Gastrocnemius medialis (tissue), 4 donors: ENCODE measurements at regions of chr14 and their contacts with region 1.

Region 1: DNA sequence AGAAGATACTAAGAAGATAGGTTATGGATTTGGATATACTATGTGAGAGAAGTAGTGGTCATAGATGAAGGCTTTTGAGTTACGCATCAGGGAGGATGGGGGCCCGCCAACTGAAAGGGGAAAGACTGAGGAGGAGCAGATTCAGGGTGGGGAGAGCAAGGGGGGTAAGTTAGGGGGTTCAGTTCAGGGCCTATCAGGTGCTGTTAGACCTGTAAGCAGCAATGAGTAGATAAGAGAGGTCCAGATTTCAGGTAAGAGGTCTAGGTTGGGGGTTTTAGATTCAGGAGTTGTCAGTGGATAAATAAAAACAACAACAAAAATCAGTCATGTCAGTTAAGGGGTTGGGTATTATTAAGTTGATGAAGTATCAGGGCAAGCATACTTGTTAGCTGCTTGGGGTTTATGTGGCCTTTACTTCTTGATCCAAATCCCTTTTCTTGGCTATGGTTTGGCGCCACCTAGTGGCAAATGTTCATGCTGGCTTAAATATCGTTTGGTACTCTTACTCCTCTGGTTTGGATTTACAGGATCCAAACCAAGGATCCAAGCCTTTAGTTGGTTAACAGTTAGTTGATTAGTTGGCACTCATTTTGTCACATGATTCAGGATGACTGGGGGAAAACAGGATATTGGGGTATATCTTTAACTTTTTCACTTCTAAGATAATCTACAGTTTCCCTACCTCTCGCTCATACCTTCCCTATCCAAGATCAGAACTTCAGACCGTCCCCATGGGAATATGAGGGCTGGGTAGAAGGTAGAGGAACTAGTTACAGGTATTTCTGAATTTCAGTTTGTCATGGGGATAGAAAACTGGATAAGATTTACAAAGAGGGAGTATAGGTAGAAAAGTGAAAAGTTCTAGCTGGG is 65.1 kb downstream of the PCNX1 start:
- DNase-seq: peak; percentile 55 to 79
- ATAC-seq: peak; percentile 94 to 97
- H3K4me3 ChIP-seq: no peak overlapping the region
- H3K27ac ChIP-seq: peak overlapping the region in 1 of 4 donors; percentile 0
- H3K4me1 ChIP-seq: peaks cover 0 to 4% of the 10 kb centered on the region in 2 donors
- H3K27me3 ChIP-seq: no peaks in the 10 kb centered on the region
- CTCF ChIP-seq: peak; percentile 76 to 96 (median 82)
- POLR2A ChIP-seq: no peak

Region 2: DNA sequence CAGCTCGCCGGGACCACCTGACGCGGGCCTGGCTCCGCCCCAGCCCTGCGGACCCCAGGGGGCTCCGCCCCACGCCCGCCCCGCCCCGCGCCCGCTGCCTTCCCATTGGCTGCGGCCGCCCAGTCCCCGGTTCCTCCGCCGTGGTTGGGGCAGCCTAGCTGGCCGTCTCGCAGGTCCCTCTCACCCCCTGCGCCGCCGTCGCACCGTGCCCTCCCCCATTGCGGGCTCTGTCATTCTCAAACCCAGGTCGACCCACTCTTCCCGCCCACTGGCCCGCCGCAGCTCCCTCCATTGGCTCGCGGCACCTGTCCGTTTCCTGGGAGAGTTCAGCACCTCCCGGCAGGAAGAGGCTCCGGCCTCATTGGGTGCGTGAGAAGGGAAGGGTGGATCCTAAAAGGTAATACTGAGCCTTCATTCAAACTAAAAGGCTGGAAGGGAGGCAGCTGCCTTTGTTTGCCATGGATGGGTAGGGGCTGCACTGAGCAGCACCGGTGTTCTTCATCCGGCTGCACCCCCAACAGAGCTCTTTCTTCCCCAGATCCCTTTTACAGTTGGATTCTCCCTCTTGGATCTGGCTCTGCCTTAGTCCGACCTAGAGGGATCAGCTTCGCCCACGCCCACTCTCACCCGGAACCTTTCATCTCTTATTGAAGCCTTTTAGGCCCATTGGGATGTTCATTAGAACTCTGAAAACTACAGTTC is 162.6 kb before region 1 on chr14:
- in situ Hi-C with region 1: loop called in 2 of 4 experiments (anchors 10 to 25 kb)
- intact Hi-C with region 1: no loop called
- DNase-seq: peak; percentile 77 to 95
- ATAC-seq: peak; percentile 90 to 92
- H3K4me3 ChIP-seq: peak overlapping the region; percentile 62 to 85 (median 76)
- H3K27ac ChIP-seq: peak overlapping the region; percentile 49 to 84 (median 80)
- H3K4me1 ChIP-seq: peaks cover 6 to 10% of the 10 kb centered on the region in 2 donors
- H3K27me3 ChIP-seq: peaks cover 0 to 6% (median 0%) of the 10 kb centered on the region in 3 donors
- CTCF ChIP-seq: no peak
- POLR2A ChIP-seq: no peak

Region 3: DNA sequence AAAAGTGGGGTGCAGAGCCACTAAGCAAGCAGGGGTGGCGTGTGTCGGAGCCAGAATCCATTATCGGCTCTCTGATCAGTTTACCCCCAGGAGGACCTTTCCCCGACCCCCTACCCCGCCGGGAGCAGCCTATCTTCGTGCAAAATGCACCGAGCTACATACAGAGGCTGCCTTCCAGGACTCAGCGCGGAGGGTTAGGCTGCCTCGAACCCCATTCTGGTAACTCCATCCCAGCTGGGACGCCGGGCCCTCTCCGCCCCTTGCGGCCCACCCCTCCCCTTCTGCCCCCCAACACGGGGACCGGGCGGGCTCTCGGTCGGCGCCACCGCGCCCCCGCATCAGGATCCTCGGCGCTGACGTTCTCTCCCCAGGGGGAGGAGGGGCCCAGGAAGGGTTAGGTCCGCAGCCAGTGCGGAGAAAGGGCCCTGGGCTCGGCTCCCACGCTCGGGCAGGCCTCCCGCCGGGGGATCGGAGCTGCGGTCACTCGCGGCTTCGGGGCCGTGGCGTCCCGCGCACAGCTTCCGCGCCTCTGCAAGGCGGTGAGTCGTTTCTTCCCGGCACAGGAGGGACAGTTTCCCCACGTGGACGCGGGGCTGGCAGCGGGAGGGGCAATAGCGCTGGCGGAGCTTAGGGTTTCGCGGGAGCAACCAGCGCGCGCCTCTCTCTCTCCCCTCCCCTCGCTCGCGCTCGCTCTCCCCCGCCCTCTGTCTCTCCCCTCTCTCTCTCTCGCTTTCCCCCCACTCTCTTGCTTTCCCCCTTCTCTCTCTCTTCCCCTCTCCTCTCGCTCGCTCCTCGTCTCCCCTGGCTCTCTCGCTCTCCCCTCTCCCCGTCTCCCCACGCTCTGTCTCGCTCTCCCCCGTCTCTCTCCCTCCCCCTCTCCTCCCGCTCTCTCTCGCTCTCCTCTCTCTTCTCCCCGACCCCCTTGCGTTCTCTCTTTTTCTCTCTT is 150.5 kb before region 1 on chr14:
- in situ Hi-C with region 1: loop called (anchors 5 to 25 kb)
- intact Hi-C with region 1: loop called (anchors 5 kb)
- DNase-seq: peak in 1 of 2 donors; percentile 22
- ATAC-seq: peak; percentile 18 to 32
- H3K4me3 ChIP-seq: peak overlapping the region; percentile 57 to 99 (median 71)
- H3K27ac ChIP-seq: peak overlapping the region in 1 of 4 donors; percentile 16
- H3K4me1 ChIP-seq: peaks cover 10 to 14% of the 10 kb centered on the region in 2 donors
- H3K27me3 ChIP-seq: peaks cover 2 to 9% (median 6%) of the 10 kb centered on the region in 3 donors
- CTCF ChIP-seq: no peak
- POLR2A ChIP-seq: no peak

Region 4: GRCh38 chr14:70907176-70907995 is 65.0 kb before region 1 on chr14 and contains the start of gene PCNX1:
- in situ Hi-C with region 1: loop called (anchors 5 to 10 kb)
- intact Hi-C with region 1: loop called (anchors 1 kb)
- DNase-seq: peak; percentile 72 to 83
- ATAC-seq: peak; percentile 81
- H3K4me3 ChIP-seq: peak within 1 kb of the TSS; percentile 75 to 99 (median 92)
- H3K27ac ChIP-seq: peak within 1 kb of the TSS; percentile 82 to 97 (median 88)
- H3K4me1 ChIP-seq: peaks cover 24 to 34% of the 10 kb centered on the region in 2 donors
- H3K27me3 ChIP-seq: no peaks in the 10 kb centered on the region
- CTCF ChIP-seq: peak; percentile 74 to 95 (median 94)
- POLR2A ChIP-seq: peak; percentile 72 to 73
- total RNA-seq, gene PCNX1: 34.4 to 64.5 (median 42.0) TPM